CD4-positive, alpha-beta memory T cell (primary cell): ENCODE measurements at regions of chr2 and their contacts with region 1.

Region 1: DNA sequence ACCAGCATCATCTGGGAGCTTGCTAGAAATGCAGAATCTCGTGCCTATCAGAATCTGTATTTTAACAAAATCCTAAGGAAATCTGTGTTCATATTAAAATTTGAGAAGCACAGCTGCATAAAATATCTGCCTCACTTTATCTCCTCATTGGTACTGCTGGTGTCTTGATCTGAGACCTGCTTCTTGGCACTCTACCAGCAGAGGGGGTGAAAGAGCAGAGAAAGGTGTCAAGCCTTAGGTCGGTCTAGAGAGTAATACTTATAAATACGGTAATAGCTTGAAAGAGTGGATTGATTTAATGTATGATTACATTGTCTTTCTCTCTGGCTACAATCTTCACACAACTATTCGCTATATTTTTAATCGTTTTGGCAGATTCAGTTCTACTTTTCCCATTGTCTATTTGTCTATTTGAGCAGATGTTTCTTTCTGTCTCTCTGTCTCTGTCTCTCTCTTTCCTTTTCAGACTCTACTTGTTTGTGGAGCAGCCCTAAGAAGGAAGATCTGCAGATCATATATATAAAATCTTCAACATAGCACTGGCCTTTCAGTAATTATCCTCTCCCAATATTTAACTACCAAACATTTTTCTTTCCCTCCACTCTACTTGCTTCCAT is 1.7 kb upstream of the GCG start:
- DNase-seq: peak in 4 of 5 donors; percentile 55 to 58 (median 57)
- H3K4me3 ChIP-seq: no peak overlapping the region
- H3K4me3 Mint-ChIP-seq: peak overlapping the region in 5 of 8 donors; percentile 7 to 72 (median 35)
- H3K27ac ChIP-seq: no peak overlapping the region
- H3K27ac Mint-ChIP-seq: no peak overlapping the region
- H3K4me1 ChIP-seq: peaks cover 6% of the 10 kb centered on the region
- H3K4me1 Mint-ChIP-seq: peaks cover 0 to 5% (median 3%) of the 10 kb centered on the region in 4 donors
- H3K27me3 ChIP-seq: no peaks in the 10 kb centered on the region
- H3K27me3 Mint-ChIP-seq: peaks cover 14 to 16% of the 10 kb centered on the region in 2 donors

Region 2: GRCh38 chr2:162172802-162173370 is 19.2 kb after region 1 on chr2:
- CTCF ChIA-PET with region 1: interaction called, 15 read pairs
- POLR2A ChIA-PET with region 1: no interaction called
- intact Hi-C with region 1: no loop called
- DNase-seq: no peak
- H3K4me3 ChIP-seq: no peak overlapping the region
- H3K4me3 Mint-ChIP-seq: no peak overlapping the region
- H3K27ac ChIP-seq: no peak overlapping the region
- H3K27ac Mint-ChIP-seq: no peak overlapping the region
- H3K4me1 ChIP-seq: no peaks in the 10 kb centered on the region
- H3K4me1 Mint-ChIP-seq: peaks cover 0 to 2% (median 0%) of the 10 kb centered on the region in 4 donors
- H3K27me3 ChIP-seq: no peaks in the 10 kb centered on the region
- H3K27me3 Mint-ChIP-seq: peaks cover 11 to 12% of the 10 kb centered on the region in 2 donors

Region 3: DNA sequence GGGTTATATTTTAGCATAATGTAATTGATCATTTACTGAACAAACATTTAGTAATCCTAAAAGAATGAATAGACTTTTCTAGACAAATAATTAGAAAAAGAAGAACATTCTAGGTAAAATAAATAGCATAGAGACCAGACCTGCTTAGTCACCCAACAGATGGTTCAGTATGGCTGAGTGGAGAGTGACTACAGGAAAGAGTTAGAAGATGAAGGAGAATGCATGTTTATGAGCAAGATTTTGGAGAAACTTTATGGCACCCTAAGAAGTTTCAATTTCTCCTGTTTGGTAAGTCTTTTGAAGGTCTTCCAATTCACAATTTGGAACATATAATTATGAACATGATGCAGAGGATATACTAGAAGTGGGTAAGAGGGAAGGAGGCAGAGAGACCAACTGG is 56.7 kb after region 1 on chr2:
- CTCF ChIA-PET with region 1: no interaction called
- POLR2A ChIA-PET with region 1: no interaction called
- intact Hi-C with region 1: no loop called
- DNase-seq: no peak
- H3K4me3 ChIP-seq: no peak overlapping the region
- H3K4me3 Mint-ChIP-seq: no peak overlapping the region
- H3K27ac ChIP-seq: no peak overlapping the region
- H3K27ac Mint-ChIP-seq: no peak overlapping the region
- H3K4me1 ChIP-seq: no peaks in the 10 kb centered on the region
- H3K4me1 Mint-ChIP-seq: no peaks in the 10 kb centered on the region
- H3K27me3 ChIP-seq: no peaks in the 10 kb centered on the region
- H3K27me3 Mint-ChIP-seq: peaks cover 0 to 1% of the 10 kb centered on the region in 2 donors

Region 4: GRCh38 chr2:162308752-162309503 is 155.2 kb after region 1 on chr2:
- CTCF ChIA-PET with region 1: no interaction called
- POLR2A ChIA-PET with region 1: no interaction called
- intact Hi-C with region 1: no loop called
- DNase-seq: no peak
- H3K4me3 ChIP-seq: no peak overlapping the region
- H3K4me3 Mint-ChIP-seq: no peak overlapping the region
- H3K27ac ChIP-seq: no peak overlapping the region
- H3K27ac Mint-ChIP-seq: peak overlapping the region in 5 of 7 donors; percentile 3 to 59 (median 48)
- H3K4me1 ChIP-seq: peaks cover 26% of the 10 kb centered on the region
- H3K4me1 Mint-ChIP-seq: peaks cover 26 to 47% (median 35%) of the 10 kb centered on the region in 4 donors
- H3K27me3 ChIP-seq: no peaks in the 10 kb centered on the region
- H3K27me3 Mint-ChIP-seq: no peaks in the 10 kb centered on the region